Activated naive CD8-positive, alpha-beta T cell treated with anti-CD3 and anti-CD28 coated beads, Interleukin-2, amount 10 ng/mL, durations not matched to agents 7 days and 5 days (primary cell): ENCODE measurements at regions of chr17 and their contacts with region 1.

Region 1: DNA sequence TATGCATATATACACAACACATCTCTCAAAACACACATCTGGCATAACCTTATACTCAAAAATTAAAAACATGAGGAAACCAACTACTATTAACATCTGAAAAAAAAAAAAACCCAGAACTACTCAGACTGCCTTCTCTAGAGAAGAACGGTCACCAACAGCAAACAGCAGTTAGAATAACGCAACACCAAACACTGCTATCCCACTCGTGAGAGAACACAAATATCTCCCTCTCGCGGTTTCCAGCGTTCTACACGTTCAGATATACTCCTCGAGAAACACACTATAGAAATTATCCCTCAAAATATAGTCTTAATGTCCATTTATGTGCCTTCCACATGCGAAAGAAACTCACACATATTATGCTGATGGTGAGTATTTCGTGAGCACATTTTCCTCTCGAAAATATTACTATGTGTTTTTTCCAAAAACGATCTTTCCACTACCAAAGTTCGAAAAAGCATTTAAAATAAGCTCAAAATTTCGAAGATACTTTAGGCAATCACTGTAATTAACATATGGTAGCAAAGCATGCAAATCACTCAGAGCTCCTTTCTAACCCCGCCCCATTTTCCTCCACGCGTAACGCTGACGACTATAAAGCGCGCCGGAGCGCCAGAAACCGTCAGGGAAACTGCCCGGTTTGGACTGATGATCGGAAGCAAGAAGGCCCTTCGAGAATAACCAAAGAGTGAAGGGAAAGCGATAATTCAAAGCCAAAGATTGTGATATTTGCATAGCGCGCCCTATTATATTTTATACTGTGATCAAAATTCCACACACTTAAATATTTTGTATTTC is 60.1 kb downstream of the TEX14 start:
- DNase-seq: peak; percentile 92
- ATAC-seq: peak; percentile 90
- H3K4me3 Mint-ChIP-seq: no peak overlapping the region
- H3K27ac Mint-ChIP-seq: no peak overlapping the region
- H3K4me1 Mint-ChIP-seq: peaks cover 10% of the 10 kb centered on the region
- H3K27me3 Mint-ChIP-seq: peaks cover 2% of the 10 kb centered on the region

Region 2: DNA sequence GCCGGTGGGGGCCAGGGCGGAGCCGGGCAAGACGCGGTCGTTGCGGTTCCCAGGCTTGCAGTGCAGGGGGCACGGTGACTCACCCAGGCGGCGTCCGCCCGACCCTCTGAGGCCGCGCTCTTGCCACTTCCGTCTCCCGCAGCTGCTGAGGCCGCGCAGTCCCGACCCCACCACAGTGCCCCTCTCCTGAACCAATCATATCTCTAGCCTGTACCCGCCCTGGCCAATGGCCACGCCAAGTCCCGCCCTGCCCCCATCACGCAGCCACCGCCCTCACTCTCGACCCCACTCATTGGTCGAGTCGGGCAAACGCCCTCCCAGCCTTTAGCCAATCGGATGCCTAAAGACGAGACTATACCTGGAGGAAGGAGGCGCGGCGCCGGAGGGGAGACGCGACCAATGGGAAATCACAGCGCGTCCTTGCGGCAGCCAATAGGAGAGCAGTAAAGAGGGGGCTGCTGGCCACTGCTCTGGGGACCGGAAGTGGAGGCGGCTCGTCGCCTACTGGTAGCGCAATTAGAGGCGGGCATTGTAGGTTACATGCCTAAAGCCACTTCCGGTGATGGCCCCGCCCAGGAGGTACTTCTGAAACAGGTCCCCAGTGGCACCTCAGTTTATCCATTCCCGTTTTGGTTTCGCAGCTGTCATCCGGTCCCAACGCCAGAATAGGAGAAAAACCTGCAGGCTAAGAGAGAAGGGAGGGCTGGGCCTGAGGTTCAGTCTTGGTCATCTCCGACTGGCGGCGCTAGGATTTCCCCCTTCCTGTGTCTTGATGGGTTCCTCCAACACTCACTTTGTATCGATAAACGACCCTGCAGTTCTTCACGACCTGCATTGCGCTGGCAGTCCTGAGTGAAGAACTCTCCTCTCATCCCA is 113.8 kb before region 1 on chr17:
- POLR2A ChIA-PET with region 1: interaction called, 68 read pairs
- DNase-seq: peak; percentile 97
- ATAC-seq: peak; percentile 82
- H3K4me3 Mint-ChIP-seq: peak overlapping the region; percentile 94
- H3K27ac Mint-ChIP-seq: peak overlapping the region; percentile 97
- H3K4me1 Mint-ChIP-seq: peaks cover 41% of the 10 kb centered on the region
- H3K27me3 Mint-ChIP-seq: peaks cover 3% of the 10 kb centered on the region

Region 3: GRCh38 chr17:58565780-58566189 is 65.9 kb before region 1 on chr17:
- POLR2A ChIA-PET with region 1: no interaction called
- DNase-seq: no peak
- ATAC-seq: no peak
- H3K4me3 Mint-ChIP-seq: no peak overlapping the region
- H3K27ac Mint-ChIP-seq: no peak overlapping the region
- H3K4me1 Mint-ChIP-seq: peaks cover 3% of the 10 kb centered on the region
- H3K27me3 Mint-ChIP-seq: peaks cover 3% of the 10 kb centered on the region

Region 4: GRCh38 chr17:58585377-58585944 is 46.3 kb before region 1 on chr17:
- POLR2A ChIA-PET with region 1: interaction called, 10 read pairs
- DNase-seq: no peak
- ATAC-seq: no peak
- H3K4me3 Mint-ChIP-seq: no peak overlapping the region
- H3K27ac Mint-ChIP-seq: no peak overlapping the region
- H3K4me1 Mint-ChIP-seq: peaks cover 4% of the 10 kb centered on the region
- H3K27me3 Mint-ChIP-seq: peaks cover 8% of the 10 kb centered on the region

Region 5: DNA sequence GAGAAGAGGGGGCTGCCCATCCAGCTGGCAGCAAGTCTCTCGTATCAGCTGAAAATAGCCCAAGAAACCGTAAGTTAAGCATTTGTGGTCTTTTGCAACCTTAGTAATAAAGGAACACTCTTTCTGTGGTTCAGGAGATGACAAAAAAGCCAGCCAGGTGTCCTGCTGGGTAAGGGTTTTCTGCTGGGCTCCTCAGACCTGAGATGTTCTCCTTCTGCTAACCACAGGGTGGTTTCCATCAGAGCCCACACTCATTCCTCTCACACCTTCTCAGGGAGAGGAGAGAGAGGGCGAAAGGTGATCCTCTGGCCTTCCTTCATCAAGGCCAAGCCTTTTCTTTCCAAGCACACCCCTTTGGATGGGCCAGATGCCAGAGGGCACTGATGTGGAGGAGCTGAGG is 10.5 kb before region 1 on chr17:
- POLR2A ChIA-PET with region 1: interaction called, 12 read pairs
- DNase-seq: no peak
- ATAC-seq: no peak
- H3K4me3 Mint-ChIP-seq: no peak overlapping the region
- H3K27ac Mint-ChIP-seq: no peak overlapping the region
- H3K4me1 Mint-ChIP-seq: no peaks in the 10 kb centered on the region
- H3K27me3 Mint-ChIP-seq: no peaks in the 10 kb centered on the region

Region 6: DNA sequence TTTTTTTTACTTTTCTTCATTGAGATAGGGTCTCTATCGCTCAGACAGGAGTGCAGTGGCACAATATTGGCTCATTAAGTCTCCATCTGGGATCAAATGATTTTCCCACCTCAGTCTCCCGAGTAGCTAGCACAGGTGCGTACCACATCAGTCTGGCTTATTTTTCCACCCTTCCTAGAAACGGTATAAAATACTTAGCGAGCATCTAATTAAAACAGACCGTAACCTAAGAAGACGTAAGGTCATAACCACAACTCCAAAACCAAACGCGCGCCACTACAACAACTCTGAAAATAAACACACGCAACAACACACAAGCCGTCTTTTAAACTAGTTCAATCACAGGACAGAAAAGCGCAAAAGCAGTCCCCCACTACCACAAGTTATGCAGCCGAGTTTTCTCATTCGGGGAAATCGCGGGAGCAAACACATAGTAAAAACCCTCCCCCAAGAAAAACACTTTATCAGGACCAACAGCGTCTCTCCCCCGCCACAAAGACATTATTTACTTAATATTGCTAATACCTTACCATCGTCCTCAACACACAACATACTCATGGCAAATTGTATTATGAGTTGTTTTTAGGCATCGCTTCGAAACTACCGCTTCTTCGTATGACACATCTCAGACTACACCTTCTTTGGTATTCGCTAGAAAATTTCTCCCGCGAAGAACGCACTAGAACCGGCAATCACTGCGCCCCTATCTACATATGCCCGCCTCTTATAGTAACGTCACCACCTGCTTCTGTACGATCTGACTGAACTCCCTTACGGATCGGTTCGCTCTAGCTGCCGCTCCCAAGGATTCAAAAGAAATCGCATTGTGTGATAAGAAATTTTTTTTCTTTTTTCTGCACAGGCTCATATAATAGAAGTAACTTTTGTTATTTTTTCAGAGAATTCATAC is 27.3 kb after region 1 on chr17:
- POLR2A ChIA-PET with region 1: interaction called, 135 read pairs
- DNase-seq: peak; percentile 56
- ATAC-seq: peak; percentile 83
- H3K4me3 Mint-ChIP-seq: peak overlapping the region; percentile 72
- H3K27ac Mint-ChIP-seq: peak overlapping the region; percentile 96
- H3K4me1 Mint-ChIP-seq: peaks cover 16% of the 10 kb centered on the region
- H3K27me3 Mint-ChIP-seq: peaks cover 8% of the 10 kb centered on the region

Region 7: DNA sequence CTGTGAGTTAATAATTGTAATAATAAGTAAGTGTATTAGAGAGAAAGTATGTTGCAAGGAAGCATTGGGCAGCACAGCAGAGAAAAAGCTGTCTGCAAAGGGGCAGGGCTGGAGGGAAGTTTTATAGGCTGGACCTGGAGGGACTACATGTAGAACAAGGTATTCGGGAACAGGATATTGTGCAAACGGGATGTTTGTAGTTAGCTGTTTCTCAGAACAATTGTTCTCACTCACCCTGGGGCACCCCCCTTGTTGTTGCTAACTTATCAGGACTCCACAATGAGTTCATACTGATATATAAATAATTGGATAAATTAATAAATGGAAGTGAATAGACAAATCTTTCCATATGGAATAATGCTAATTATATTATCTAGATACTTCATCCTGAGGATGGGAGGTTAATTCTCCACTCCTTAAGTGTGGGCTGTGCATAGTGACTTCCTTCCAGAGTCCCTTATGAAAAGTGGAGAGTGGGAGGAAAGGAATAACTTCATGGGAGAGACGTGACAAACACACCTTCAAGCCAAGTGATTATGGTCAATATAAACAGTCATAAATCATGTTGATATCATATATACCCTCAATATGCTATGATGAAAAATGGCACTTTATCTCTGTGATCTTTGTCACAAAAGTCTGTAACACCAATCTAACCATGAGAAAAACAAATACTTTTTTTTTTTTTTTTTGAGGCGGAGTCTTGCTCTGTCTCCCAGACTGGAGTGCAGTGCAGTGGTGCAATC is 209.3 kb after region 1 on chr17:
- POLR2A ChIA-PET with region 1: no interaction called
- DNase-seq: no peak
- ATAC-seq: no peak
- H3K4me3 Mint-ChIP-seq: no peak overlapping the region
- H3K27ac Mint-ChIP-seq: no peak overlapping the region
- H3K4me1 Mint-ChIP-seq: no peaks in the 10 kb centered on the region
- H3K27me3 Mint-ChIP-seq: peaks cover 17% of the 10 kb centered on the region

Region 8: DNA sequence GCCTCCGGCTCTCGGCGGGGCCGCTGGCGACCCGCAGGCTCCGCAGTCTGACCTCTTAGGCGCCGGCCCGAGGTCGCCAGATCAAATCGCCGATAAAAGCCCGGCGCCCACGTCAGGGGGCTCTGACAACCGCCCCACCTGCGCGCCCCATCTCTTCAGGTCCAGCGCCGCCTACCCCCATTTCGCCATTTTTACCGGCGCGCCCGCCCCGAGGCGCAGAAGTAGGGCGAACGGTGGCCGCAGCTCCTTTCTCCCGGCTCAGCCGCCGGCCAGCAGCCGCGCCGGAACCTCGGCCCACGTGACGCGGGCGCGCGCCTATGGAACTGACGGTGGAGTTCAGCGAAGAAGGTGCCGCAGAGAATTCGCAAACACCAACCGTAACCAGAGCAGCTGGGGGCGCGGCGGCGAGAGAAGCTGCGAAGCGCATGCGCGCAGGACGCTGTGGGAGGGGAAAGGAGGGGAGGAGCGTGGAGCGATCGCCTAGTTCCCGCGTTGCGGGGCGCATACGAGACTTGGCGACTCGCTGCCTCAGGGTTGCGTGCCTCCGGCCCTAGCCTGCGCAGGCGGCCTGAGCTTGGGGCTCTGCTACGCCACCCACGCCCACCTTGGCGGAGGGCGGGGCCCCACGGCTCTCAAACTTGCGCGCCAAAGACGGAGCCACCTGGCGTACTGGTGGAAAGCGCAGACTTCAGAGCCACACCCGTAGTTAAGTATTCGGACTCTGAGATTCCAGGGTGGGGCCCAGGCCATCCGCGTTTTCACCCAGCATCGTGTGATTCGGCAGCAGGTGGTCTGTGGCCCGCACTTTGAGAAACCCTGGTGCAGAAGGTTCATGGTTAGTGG is 475.0 kb after region 1 on chr17 and contains the start of gene TRIM37:
- POLR2A ChIA-PET with region 1: interaction called, 11 read pairs
- DNase-seq: peak; percentile 99
- ATAC-seq: peak; percentile 97
- H3K4me3 Mint-ChIP-seq: peak within 1 kb of the TSS; percentile 85
- H3K27ac Mint-ChIP-seq: peak within 1 kb of the TSS; percentile 93
- H3K4me1 Mint-ChIP-seq: peaks cover 33% of the 10 kb centered on the region
- H3K27me3 Mint-ChIP-seq: no peaks in the 10 kb centered on the region
- total RNA-seq, gene TRIM37: 25.1 to 25.5 TPM